PC-9 (cell line): ENCODE measurements at regions of chrX and their contacts with region 1.

Region 1: GRCh38 chrX:15559227-15559626 is 41.5 kb downstream of the ACE2 start:
- DNase-seq: no peak
- H3K4me3 ChIP-seq: no peak overlapping the region
- H3K27ac ChIP-seq: no peak overlapping the region
- H3K4me1 ChIP-seq: no peaks in the 10 kb centered on the region
- H3K27me3 ChIP-seq: no peaks in the 10 kb centered on the region
- CTCF ChIP-seq: no peak

Region 2: GRCh38 chrX:15430584-15430983 is 128.6 kb before region 1 on chrX:
- CTCF ChIA-PET with region 1: interaction called, 14 read pairs
- POLR2A ChIA-PET with region 1: no interaction called
- intact Hi-C with region 1: no loop called
- DNase-seq: no peak
- H3K4me3 ChIP-seq: no peak overlapping the region
- H3K27ac ChIP-seq: no peak overlapping the region
- H3K4me1 ChIP-seq: no peaks in the 10 kb centered on the region
- H3K27me3 ChIP-seq: no peaks in the 10 kb centered on the region
- CTCF ChIP-seq: no peak